ENCODE measurements at regions of chr12 and their contacts with region 1.

Region 1: GRCh38 chr12:48001505-48002413 is 2.5 kb downstream of the COL2A1 start:
- DNase-seq: no peak
- ATAC-seq: peak; percentile 16; the same call in 2 of the 3 replicates
- H3K4me3 ChIP-seq: peak overlapping the region; percentile 12 to 64 (median 38); a peak in 5 of 6 replicates
- H3K27ac ChIP-seq: no peak overlapping the region
- H3K4me1 ChIP-seq: peaks cover 46% of the 10 kb centered on the region
- H3K27me3 ChIP-seq: peaks cover 6 to 53% of the 10 kb centered on the region in 2 experiments
- CTCF ChIP-seq: no peak
- EP300 ChIP-seq: no peak
- POLR2A ChIP-seq: no peak
- RAD21 ChIP-seq: no peak

Region 2: DNA sequence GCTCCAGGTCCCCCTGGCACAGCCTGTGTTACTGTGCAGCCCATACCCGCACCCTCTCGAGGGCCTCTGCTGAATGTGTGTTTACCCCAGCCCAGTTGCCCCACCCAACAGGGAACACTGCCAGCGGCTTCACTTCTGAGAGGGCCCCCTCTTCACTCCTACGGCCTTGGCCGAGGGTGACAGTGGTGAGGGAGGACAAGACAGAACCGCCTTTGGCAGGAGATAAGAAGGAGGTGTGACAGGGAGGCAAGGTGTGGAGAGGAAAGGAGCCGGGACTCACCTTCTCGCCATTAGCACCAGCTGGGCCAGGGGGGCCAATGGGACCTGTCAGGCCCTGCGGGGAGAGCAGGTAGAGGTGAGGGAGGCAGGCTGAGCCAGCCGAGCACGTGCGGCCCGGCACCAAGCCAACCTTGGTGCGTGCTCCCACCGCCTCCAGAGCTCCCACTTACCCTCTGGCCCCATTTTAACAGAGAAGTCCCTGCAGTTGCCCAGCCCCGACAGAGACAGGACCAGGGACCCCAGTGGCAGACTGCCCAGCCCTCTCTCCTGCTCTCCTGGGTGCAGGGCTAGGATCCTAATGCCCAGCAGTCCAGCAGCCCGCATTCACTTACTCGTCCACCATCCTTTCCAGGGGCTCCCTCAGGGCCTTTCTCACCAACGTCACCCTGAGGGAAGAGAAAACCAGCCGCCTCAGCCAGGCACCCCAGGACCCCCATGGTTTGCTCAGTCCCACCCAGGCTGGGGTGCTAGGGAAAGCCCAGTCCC is 20.1 kb before region 1 on chr12:
- CTCF ChIA-PET with region 1: no interaction called
- POLR2A ChIA-PET with region 1: no interaction called
- in situ Hi-C with region 1: no loop called
- intact Hi-C with region 1: no loop called
- DNase-seq: peak; percentile 34
- ATAC-seq: peak; percentile 51
- H3K4me3 ChIP-seq: peak overlapping the region in 1 of 3 experiments; percentile 40; a peak in 1 of 6 replicates
- H3K27ac ChIP-seq: no peak overlapping the region
- H3K4me1 ChIP-seq: peaks cover 13% of the 10 kb centered on the region
- H3K27me3 ChIP-seq: peaks cover 0 to 4% of the 10 kb centered on the region in 2 experiments; a peak in 1 of 5 replicates
- CTCF ChIP-seq: no peak
- EP300 ChIP-seq: no peak
- POLR2A ChIP-seq: no peak
- RAD21 ChIP-seq: no peak

Region 3: GRCh38 chr12:48021485-48022179 is 19.9 kb after region 1 on chr12:
- CTCF ChIA-PET with region 1: no interaction called
- POLR2A ChIA-PET with region 1: interaction called, 3 read pairs
- in situ Hi-C with region 1: no loop called
- intact Hi-C with region 1: loop called (anchors 2 kb)
- DNase-seq: no peak
- ATAC-seq: no peak; the same call in 2 of the 3 replicates
- H3K4me3 ChIP-seq: no peak overlapping the region
- H3K27ac ChIP-seq: no peak overlapping the region
- H3K4me1 ChIP-seq: peaks cover 74% of the 10 kb centered on the region
- H3K27me3 ChIP-seq: peaks cover 2 to 3% of the 10 kb centered on the region in 2 experiments; a peak in 1 of 5 replicates
- CTCF ChIP-seq: no peak
- EP300 ChIP-seq: no peak
- POLR2A ChIP-seq: no peak
- RAD21 ChIP-seq: no peak

Region 4: GRCh38 chr12:48061948-48062719 is 60.4 kb after region 1 on chr12:
- CTCF ChIA-PET with region 1: no interaction called
- POLR2A ChIA-PET with region 1: no interaction called
- in situ Hi-C with region 1: no loop called
- intact Hi-C with region 1: loop called (anchors 2 kb)
- DNase-seq: no peak
- ATAC-seq: no peak
- H3K4me3 ChIP-seq: no peak overlapping the region
- H3K27ac ChIP-seq: no peak overlapping the region
- H3K4me1 ChIP-seq: no peaks in the 10 kb centered on the region
- H3K27me3 ChIP-seq: no peaks in the 10 kb centered on the region
- CTCF ChIP-seq: peak; percentile 43
- EP300 ChIP-seq: no peak
- POLR2A ChIP-seq: no peak
- RAD21 ChIP-seq: no peak

Region 5: GRCh38 chr12:48105862-48106680 is 104.3 kb after region 1 on chr12 and contains the start of gene SENP1:
- CTCF ChIA-PET with region 1: no interaction called
- POLR2A ChIA-PET with region 1: no interaction called
- in situ Hi-C with region 1: no loop called
- intact Hi-C with region 1: loop called (anchors 10 kb)
- DNase-seq: peak; percentile 80
- ATAC-seq: peak; percentile 93
- H3K4me3 ChIP-seq: peak within 1 kb of the TSS; percentile 85 to 95 (median 89)
- H3K27ac ChIP-seq: peak within 1 kb of the TSS; percentile 99
- H3K4me1 ChIP-seq: peaks cover 25% of the 10 kb centered on the region
- H3K27me3 ChIP-seq: no peaks in the 10 kb centered on the region; a peak in 1 of 5 replicates
- CTCF ChIP-seq: peak; percentile 46
- EP300 ChIP-seq: 0 out of 4 replicates have a peak, but pooled peaks of 1 of the 2 experiments have one; percentile 19
- POLR2A ChIP-seq: peak; percentile 61 to 79
- RAD21 ChIP-seq: peak; percentile 40; the same call in 1 of the 2 replicates
- total RNA-seq, gene SENP1: 20.2 and 25.3 TPM in 2 replicates

Measured in HepG2 (cell line).